Activated T-helper 2 cell treated with anti-CD3 and anti-CD28 coated beads, Interferon-gamma antibody, Interleukin-2, Interleukin-4, amounts not matched to agents 10 μg/mL and 5 μg/mL and 100 μg/mL, durations not matched to agents 14 hours and 24 hours and 36 hours (primary cell): ENCODE measurements at regions of chr6 and their contacts with region 1.

Region 1: DNA sequence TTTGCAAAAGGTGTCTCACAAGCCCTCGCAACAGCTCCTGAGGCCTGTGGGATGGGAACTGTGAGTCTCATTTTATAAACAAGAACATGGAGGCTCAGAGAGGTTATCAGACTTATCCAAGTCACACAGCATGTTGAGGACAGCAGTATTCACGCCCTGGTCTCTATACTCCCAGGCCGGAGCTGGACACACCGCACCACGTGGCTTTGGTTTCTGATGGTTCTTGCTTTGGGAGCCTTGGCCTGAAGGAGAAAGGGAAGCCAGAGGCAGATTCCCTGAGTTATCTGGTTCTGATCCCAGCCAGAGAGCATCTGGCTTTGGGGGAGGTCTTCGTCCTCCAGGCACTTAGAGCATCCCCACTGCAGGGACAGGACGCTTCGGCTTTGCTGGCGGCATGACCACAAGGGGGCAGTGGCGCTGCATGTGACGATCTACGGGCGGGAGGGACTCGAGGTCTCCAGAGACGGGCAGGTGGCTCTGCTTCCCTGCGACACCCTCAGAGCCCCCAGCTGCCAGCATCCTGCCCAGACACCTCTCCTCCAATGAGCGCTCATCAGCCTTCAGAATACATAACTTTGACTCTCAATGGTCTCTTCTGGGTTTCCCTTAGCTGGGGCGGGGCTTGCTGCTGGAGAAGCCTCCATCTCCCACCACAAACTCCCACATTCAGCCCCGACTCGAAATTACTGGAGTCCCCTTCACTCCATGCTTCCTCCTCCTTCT is 51.4 kb upstream of the SAYSD1 start:
- DNase-seq: peak; percentile 70
- H3K4me3 Mint-ChIP-seq: no peak overlapping the region
- H3K27ac Mint-ChIP-seq: no peak overlapping the region
- H3K4me1 Mint-ChIP-seq: peaks cover 3% of the 10 kb centered on the region
- H3K27me3 Mint-ChIP-seq: no peaks in the 10 kb centered on the region

Region 2: GRCh38 chr6:38973178-38974054 is 192.9 kb before region 1 on chr6:
- intact Hi-C with region 1: loop called (anchors 10 kb)
- DNase-seq: no peak
- H3K4me3 Mint-ChIP-seq: no peak overlapping the region
- H3K27ac Mint-ChIP-seq: no peak overlapping the region
- H3K4me1 Mint-ChIP-seq: peaks cover 5% of the 10 kb centered on the region
- H3K27me3 Mint-ChIP-seq: peaks cover 46% of the 10 kb centered on the region

Region 3: GRCh38 chr6:39003072-39003471 is 163.3 kb before region 1 on chr6:
- intact Hi-C with region 1: loop called (anchors 10 kb)
- DNase-seq: no peak
- H3K4me3 Mint-ChIP-seq: no peak overlapping the region
- H3K27ac Mint-ChIP-seq: no peak overlapping the region
- H3K4me1 Mint-ChIP-seq: no peaks in the 10 kb centered on the region
- H3K27me3 Mint-ChIP-seq: peaks cover 44% of the 10 kb centered on the region

Region 4: DNA sequence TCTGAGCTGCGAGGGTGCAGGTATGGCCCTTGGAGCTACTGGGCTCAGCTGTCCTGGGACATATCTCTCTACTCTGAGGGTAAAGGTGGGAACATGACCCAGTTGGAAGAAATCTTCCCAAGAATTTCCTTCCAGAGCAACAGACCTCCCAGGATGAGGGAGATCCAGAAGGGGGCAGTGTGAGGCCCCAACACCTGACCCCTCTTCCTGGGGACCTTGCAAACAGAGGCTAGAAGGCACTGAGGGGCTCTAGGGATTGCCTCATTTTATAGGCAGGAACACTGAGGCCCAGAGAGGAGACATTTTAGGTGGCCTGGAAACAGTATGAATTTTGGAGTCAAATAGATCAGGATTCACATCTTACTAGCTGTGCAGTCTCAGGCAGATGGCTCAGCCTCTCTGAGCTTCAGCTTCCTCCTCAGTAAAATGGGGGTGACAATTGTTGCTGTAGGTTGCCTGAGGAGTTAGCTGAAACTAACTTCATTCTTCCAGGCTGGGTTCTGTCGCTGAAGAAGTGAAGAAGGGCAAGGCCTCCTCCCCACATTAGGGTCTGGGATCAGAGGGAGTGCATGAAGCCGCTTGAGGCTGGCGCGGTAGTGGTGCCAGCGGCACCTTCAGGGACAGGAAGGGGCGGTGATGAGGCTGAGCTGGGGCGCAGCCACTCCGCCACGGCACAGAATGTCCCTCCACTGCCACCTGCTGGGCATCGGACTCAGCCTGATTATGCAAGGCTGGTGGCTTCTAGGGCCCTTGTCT is 136.5 kb after region 1 on chr6:
- intact Hi-C with region 1: loop called (anchors 1 kb)
- DNase-seq: peak; percentile 77
- H3K4me3 Mint-ChIP-seq: peak overlapping the region; percentile 40
- H3K27ac Mint-ChIP-seq: peak overlapping the region; percentile 20
- H3K4me1 Mint-ChIP-seq: peaks cover 8% of the 10 kb centered on the region
- H3K27me3 Mint-ChIP-seq: peaks cover 4% of the 10 kb centered on the region